GM12878 (cell line): ENCODE measurements at regions of chr14 and their contacts with region 1.

Region 1: DNA sequence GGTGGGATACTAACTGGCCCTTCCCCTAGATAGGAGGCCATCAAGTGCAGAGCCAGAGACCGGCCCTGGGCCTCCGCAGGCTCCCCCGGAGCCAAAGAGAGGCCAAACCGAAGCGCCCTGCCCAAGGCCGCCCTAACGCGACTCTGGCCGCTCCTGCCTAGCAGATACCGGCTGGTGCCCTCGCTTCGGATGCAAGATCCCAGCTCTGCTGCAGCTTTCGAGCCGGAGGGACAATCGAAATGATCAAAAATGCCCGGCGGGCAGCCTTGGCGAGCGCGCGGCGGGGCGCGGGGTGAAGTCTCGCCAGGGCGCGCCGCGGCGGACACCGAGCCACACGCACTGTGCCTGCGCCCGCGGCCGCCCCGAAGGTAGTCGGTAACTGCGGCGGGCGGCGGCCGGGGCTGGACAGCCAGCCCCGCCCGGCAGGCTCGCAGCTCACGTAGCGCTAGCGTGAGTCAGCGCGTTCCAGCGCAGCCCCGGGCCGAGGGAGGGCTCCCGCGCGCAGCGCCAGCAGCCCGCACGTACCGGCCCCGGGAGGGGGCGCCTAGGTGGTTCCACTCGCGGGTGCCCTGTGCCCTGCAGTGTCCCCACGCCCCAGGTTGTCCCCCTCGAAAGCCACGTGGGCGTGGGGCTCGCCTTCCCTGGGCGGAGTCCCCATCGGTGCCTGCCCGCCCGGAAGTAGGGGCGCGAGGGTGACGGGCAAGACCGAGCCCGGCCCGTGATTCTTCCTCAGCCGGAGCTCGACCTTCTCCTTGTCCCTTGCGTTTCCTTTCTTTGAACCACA is 109.2 kb upstream of the EGLN3 start:
- DNase-seq: no peak
- ATAC-seq: peak; percentile 91
- H3K4me3 ChIP-seq: peak overlapping the region; percentile 57; the same call in 1 of the 2 replicates
- H3K27ac ChIP-seq: peak overlapping the region; percentile 52; the same call in 1 of the 2 replicates
- H3K4me1 ChIP-seq: peaks cover 20% of the 10 kb centered on the region
- H3K27me3 ChIP-seq: no peaks in the 10 kb centered on the region
- CTCF ChIP-seq: peak in 2 of 3 experiments; percentile 25 to 39; a peak in 3 of 6 replicates
- EP300 ChIP-seq: 0 out of 4 replicates have a peak, but pooled peaks of 1 of the 2 experiments have one; percentile 42
- POLR2A ChIP-seq: peak; percentile 83
- RAD21 ChIP-seq: 0 out of 2 replicates have a peak, but pooled peaks have one; percentile 6

Region 2: DNA sequence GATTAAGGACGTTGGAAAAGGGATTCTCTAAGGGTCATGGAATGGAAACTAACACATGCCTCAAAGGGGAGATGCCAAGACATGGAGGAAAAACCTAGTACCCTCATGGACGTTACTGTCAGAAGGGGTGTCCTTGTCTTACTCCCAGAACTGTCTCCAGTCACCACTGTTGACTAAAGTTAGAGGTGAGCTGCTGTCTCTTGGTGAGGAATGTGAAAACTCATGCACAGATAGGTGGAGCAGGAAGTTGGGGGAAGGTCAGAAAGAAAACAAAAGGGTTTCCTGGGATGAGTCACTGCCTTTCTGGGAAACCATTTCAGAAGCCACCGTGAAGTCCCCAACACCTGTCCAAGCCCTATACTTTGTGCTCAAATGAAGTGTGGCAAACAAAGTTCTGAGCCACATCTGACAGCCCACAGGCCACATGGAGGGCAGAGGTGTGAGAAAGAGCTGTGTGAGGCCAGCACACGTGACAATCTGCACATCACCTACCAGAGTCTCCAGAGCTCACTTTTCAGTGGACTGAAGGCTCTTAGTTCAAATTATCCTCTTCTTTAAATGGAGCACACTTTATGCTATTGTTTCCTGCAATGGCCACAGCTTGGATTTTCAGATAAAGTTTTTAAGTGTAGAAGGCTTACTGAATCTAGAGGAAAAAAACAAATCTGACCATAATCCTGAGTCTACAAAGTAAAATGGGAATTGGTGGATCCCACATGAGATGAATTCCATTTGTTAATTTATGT is 16.2 kb before region 1 on chr14:
- CTCF ChIA-PET with region 1: interaction called, 6 read pairs
- POLR2A ChIA-PET with region 1: interaction called, 6 read pairs
- RAD21 ChIA-PET with region 1: interaction called, 22 read pairs
- SMC1A ChIA-PET with region 1: interaction called, 65 read pairs
- in situ Hi-C with region 1: no loop called
- intact Hi-C with region 1: no loop called
- DNase-seq: peak; percentile 97
- ATAC-seq: peak; percentile 97
- H3K4me3 ChIP-seq: peak overlapping the region; percentile 21; the same call in 1 of the 2 replicates
- H3K27ac ChIP-seq: 0 out of 2 replicates have a peak overlapping the region, but pooled peaks have one; percentile 22
- H3K4me1 ChIP-seq: peaks cover 36% of the 10 kb centered on the region
- H3K27me3 ChIP-seq: no peaks in the 10 kb centered on the region
- CTCF ChIP-seq: no peak
- EP300 ChIP-seq: peak; percentile 89 to 92
- POLR2A ChIP-seq: no peak
- RAD21 ChIP-seq: no peak

Region 3: DNA sequence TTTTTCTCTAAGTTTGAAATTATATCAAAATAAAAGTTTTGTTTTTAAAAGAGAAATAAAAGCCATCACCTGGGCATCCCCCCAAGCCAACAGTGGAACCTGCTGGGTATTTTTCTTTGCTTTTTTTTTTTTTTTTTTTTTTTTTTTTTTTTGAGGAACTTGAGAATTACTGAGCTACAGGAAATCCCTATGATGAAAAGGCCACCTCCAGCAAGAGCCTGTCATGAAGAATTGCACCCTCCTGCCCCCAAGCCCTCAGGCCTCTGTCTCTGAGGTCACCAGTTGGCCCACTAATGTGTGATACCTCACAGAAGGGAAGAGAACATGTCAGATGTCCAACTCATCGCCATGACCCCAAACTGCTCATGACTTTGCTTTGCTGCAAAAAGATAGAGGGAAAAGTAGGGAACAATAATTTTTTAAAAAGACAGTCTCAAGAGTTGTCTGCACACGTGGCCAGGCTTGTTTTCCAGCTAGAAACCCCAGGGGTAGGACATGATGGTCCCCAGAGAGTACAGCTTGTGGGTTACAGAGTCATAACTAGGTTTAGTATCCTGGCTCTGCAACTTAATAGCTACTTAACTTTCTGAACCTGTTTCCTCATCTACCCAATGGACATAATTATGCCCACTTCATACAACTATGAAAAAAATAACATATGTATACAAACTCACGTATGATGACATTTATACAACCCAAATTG is 15.1 kb after region 1 on chr14:
- CTCF ChIA-PET with region 1: interaction called, 6 read pairs
- POLR2A ChIA-PET with region 1: interaction called, 6 read pairs
- RAD21 ChIA-PET with region 1: interaction called, 7 read pairs
- SMC1A ChIA-PET with region 1: interaction called, 25 read pairs
- in situ Hi-C with region 1: no loop called
- intact Hi-C with region 1: loop called (anchors 1 kb)
- DNase-seq: no peak
- ATAC-seq: peak; percentile 86
- H3K4me3 ChIP-seq: no peak overlapping the region
- H3K27ac ChIP-seq: no peak overlapping the region
- H3K4me1 ChIP-seq: peaks cover 17% of the 10 kb centered on the region
- H3K27me3 ChIP-seq: no peaks in the 10 kb centered on the region
- CTCF ChIP-seq: no peak
- EP300 ChIP-seq: no peak
- POLR2A ChIP-seq: no peak
- RAD21 ChIP-seq: no peak

Region 4: DNA sequence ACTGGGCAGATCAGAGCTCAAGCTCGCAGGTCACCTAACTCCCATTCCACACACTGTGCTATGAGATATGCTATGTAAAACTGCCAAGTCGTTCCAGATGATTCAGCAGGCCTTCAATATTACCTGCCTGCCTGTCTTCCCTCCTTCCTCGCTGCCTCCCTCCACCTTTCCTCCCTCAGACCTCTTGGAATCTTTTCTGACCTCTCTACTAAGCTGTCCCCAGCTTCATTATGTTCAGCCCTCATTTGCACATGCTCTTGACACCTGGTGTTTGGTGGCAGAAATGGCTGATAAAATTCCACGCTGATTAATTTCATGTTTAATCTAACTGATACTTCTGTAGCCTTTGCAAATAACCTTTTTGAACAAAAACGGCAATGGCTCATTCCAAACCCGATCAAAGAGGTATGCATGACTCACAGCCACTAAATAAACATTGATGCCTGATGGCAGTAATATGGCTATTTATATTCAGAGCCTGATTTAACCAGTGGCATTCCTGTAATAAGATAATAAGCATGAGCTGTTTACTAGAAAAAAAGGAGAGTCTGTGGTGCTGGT is 21.6 kb after region 1 on chr14:
- CTCF ChIA-PET with region 1: no interaction called
- POLR2A ChIA-PET with region 1: interaction called, 4 read pairs
- RAD21 ChIA-PET with region 1: interaction called, 6 read pairs
- SMC1A ChIA-PET with region 1: interaction called, 25 read pairs
- in situ Hi-C with region 1: no loop called
- intact Hi-C with region 1: no loop called
- DNase-seq: no peak
- ATAC-seq: no peak; the same call in 2 of the 3 replicates
- H3K4me3 ChIP-seq: no peak overlapping the region
- H3K27ac ChIP-seq: no peak overlapping the region
- H3K4me1 ChIP-seq: peaks cover 10% of the 10 kb centered on the region
- H3K27me3 ChIP-seq: no peaks in the 10 kb centered on the region
- CTCF ChIP-seq: no peak
- EP300 ChIP-seq: no peak
- POLR2A ChIP-seq: no peak
- RAD21 ChIP-seq: no peak

Region 5: DNA sequence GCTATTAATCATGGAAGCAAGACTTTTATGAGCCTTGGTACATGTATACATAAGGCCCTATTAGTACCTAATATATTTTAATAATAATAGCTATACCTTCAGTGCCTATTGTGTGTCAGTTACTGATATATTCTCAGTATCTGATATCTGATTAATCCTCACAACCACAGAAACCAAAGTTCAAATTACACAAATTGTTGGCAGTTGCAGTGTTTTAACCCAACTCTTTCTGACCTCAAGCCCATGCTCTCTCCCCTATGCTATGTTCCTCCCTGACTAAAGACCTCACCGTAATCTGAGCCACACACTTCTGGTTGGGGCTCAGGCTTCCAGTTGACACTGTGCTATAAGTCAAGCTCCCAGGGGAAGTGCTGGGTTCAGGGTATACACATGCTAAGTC is 187.6 kb after region 1 on chr14:
- CTCF ChIA-PET with region 1: no interaction called
- POLR2A ChIA-PET with region 1: interaction called, 11 read pairs
- RAD21 ChIA-PET with region 1: no interaction called
- SMC1A ChIA-PET with region 1: no interaction called
- in situ Hi-C with region 1: no loop called
- intact Hi-C with region 1: no loop called
- DNase-seq: no peak
- ATAC-seq: no peak
- H3K4me3 ChIP-seq: no peak overlapping the region
- H3K27ac ChIP-seq: no peak overlapping the region
- H3K4me1 ChIP-seq: no peaks in the 10 kb centered on the region
- H3K27me3 ChIP-seq: no peaks in the 10 kb centered on the region
- CTCF ChIP-seq: no peak
- EP300 ChIP-seq: no peak
- POLR2A ChIP-seq: no peak
- RAD21 ChIP-seq: no peak